Sigmoid colon (tissue), 7 donors: ENCODE measurements at regions of chr22 and their contacts with region 1.

Region 1: GRCh38 chr22:38353142-38353629 is 36.0 kb upstream of the CSNK1E start:
- DNase-seq: peak; percentile 80
- H3K4me3 ChIP-seq: no peak overlapping the region
- H3K27ac ChIP-seq: peak overlapping the region in 1 of 4 donors; percentile 14
- H3K4me1 ChIP-seq: peaks cover 0 to 7% (median 4%) of the 10 kb centered on the region in 4 donors
- H3K27me3 ChIP-seq: no peaks in the 10 kb centered on the region
- CTCF ChIP-seq: peak; percentile 92 to 98 (median 96)
- EP300 ChIP-seq: no peak
- POLR2A ChIP-seq: no peak

Region 2: DNA sequence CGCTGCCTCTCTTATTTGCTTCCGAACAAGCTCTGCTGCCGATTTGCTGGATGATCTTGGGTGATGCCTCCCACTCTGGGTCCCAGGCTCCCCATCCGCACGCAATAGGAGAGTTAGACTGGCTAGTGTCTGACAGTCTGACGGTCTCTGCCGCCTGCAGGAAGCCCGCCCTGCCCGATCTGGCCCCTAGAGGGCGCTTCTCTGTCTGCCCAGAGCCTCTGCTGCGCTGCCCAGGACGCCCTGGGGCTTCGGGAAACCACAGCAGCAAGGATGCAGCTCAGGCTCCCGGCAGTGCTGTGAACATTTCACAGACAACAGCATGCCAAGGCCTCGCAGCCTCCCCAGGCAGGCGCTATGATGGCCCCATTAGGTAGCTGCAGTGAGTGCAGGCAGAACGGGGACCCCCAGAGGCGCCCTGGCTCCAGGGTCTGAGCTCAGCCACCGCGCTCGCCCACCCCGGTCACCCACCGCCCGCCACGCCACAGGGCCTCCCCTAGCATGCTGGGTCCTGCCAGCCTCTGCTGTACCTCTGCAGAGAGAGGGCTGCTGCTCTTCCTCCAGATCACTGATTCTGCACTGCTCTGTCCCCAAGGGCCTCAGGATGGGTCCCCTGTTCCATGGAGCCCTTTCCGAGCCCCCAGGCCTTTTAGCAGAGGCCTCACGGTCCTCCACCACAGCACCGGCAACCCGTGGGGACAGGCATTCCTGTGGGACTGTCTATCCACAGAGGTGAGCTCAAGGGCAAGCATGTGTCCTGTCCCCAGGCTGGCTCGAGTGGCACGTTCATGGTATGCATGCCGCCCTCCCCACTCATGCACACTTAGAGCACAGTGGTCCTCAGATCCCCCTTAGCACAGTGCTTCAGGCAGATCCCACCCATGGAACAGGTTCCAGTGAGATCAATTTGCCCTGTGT is 238.4 kb before region 1 on chr22:
- intact Hi-C with region 1: loop called (anchors 1 kb)
- DNase-seq: peak; percentile 91
- H3K4me3 ChIP-seq: no peak overlapping the region
- H3K27ac ChIP-seq: no peak overlapping the region
- H3K4me1 ChIP-seq: peaks cover 0 to 9% (median 4%) of the 10 kb centered on the region in 4 donors
- H3K27me3 ChIP-seq: no peaks in the 10 kb centered on the region
- CTCF ChIP-seq: peak; percentile 53 to 97 (median 90)
- EP300 ChIP-seq: no peak
- POLR2A ChIP-seq: no peak

Region 3: DNA sequence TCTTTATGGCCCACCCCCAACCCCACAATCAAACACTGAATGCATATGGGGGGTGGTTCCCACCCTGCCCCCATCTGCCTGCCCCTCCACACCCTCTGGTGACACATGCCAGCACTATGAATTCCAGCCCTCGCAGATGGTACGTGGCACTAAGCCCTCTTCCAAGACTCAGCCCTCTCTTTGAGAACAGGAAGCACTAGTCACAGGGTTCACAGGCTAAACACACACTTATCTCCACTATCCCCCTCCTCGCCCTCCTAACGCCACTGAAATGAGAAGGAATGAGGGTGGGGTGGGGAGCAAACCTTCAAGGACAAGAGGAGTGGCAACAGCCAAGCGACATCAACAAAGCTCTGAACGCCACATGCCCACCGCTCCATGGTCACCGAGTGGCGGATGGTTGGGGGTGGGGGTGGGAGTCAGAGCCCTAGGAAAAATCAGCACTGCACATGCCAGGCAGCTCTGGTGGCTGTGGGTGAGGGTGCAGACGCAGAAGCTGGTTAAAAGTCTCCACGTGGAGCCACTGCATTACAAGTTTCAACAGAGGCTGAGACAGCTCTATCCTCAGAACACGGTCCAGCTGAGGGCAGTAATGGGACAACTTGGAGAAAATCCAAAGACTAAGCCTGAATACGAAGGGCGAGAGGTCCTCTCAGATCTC is 114.0 kb before region 1 on chr22:
- intact Hi-C with region 1: loop called (anchors 5 kb)
- DNase-seq: no peak
- H3K4me3 ChIP-seq: no peak overlapping the region
- H3K27ac ChIP-seq: peak overlapping the region; percentile 58 to 74 (median 64)
- H3K4me1 ChIP-seq: peaks cover 0 to 46% (median 30%) of the 10 kb centered on the region in 4 donors
- H3K27me3 ChIP-seq: no peaks in the 10 kb centered on the region
- CTCF ChIP-seq: peak in 1 of 4 experiments; percentile 24
- EP300 ChIP-seq: no peak
- POLR2A ChIP-seq: no peak

Region 4: GRCh38 chr22:38262051-38262795 is 91.0 kb before region 1 on chr22:
- intact Hi-C with region 1: loop called (anchors 2 kb)
- DNase-seq: peak; percentile 79
- H3K4me3 ChIP-seq: no peak overlapping the region
- H3K27ac ChIP-seq: peak overlapping the region; percentile 74 to 93 (median 90)
- H3K4me1 ChIP-seq: peaks cover 0 to 84% (median 73%) of the 10 kb centered on the region in 4 donors
- H3K27me3 ChIP-seq: no peaks in the 10 kb centered on the region
- CTCF ChIP-seq: peak in 3 of 4 experiments; percentile 49 to 63 (median 50)
- EP300 ChIP-seq: no peak
- POLR2A ChIP-seq: no peak